ENCODE measurements at regions of chr14 and their contacts with region 1.

Region 1: GRCh38 chr14:67571272-67571850 is 28.7 kb downstream of the PIGH start:
- DNase-seq: peak; percentile 78
- H3K4me3 Mint-ChIP-seq: no peak overlapping the region
- H3K27ac Mint-ChIP-seq: no peak overlapping the region
- H3K4me1 Mint-ChIP-seq: no peaks in the 10 kb centered on the region
- H3K27me3 Mint-ChIP-seq: peaks cover 2% of the 10 kb centered on the region

Region 2: DNA sequence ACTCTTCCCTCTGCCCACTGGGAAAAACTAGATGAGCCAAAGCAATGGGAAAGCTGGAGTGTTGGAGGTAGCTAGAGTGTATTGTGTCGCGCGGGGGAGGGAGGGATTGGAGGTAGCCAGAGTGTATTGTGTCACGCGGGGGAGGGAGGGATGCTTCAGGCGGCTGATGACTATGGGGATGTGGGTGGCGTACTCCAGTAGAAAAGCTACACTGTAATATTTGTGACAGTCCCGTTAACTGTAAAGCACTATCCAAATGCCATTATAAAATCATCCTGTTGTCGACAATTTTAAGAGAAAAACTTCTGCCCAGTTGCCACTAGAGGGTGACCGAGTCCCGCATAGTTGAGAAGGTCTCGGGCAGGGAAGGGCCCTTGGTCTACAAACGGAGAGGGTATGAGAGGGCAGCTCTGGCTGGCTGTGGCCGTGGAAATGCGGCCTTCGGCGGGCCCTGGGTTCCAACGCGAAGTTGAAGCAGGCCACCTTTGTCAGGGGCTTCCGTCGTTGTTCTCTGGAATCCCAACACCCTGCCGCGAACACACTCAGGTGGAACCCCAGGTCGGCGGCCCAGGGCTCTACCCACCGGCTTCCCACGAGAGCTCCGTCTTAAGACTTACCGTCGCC is 144.3 kb before region 1 on chr14:
- CTCF ChIA-PET with region 1: interaction called, 249 read pairs
- POLR2A ChIA-PET with region 1: interaction called, 3 read pairs
- intact Hi-C with region 1: loop called (anchors 1 kb)
- DNase-seq: peak; percentile 80
- H3K4me3 Mint-ChIP-seq: no peak overlapping the region
- H3K27ac Mint-ChIP-seq: no peak overlapping the region
- H3K4me1 Mint-ChIP-seq: peaks cover 3% of the 10 kb centered on the region
- H3K27me3 Mint-ChIP-seq: peaks cover 22% of the 10 kb centered on the region

Region 3: GRCh38 chr14:67514650-67515385 is 56.5 kb before region 1 on chr14:
- CTCF ChIA-PET with region 1: interaction called, 18 read pairs
- POLR2A ChIA-PET with region 1: no interaction called
- intact Hi-C with region 1: no loop called
- DNase-seq: peak; percentile 44
- H3K4me3 Mint-ChIP-seq: peak overlapping the region; percentile 78
- H3K27ac Mint-ChIP-seq: no peak overlapping the region
- H3K4me1 Mint-ChIP-seq: peaks cover 7% of the 10 kb centered on the region
- H3K27me3 Mint-ChIP-seq: no peaks in the 10 kb centered on the region

Region 4: DNA sequence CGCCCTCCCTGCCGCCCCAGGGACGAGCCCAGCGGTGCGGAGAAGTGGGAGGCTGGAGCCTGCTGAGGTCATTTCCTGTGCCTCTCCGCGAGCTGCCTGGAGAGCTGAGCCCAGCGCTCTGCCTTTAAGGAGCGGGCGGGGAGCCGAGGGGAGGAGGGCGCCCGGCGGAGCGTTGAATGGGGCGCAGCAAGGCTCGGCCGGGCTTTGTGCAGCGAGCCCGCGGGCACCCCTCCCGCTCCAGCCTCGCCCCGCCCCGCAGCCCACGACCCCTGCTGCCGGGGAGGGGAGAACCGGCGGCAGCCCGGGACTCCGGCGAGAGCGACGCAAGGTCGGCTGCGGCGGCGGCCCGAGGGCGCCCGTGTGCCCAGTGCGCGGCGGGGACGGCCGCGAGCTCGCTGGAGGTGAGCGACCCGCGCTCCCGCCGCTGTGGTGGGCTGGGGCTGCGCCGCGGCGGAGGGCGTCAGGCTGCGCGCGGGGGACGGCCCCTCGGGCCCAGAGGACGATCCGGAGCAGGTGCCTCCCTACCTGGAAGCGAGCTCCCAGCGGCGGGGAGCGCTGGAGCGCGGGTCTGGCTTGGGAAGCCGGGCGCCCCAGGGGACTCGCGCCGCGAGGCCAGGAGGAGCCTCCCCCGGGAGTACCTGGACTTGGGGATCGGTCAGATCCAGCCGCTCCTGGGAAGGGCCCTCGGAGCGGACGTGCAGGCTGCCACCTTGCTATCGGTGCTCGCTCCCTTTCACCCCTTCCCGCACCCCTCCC is 38.2 kb before region 1 on chr14 and contains the start of gene PLEKHH1:
- CTCF ChIA-PET with region 1: interaction called, 97 read pairs
- POLR2A ChIA-PET with region 1: no interaction called
- intact Hi-C with region 1: no loop called
- DNase-seq: peak; percentile 77
- H3K4me3 Mint-ChIP-seq: peak within 1 kb of the TSS; percentile 64
- H3K27ac Mint-ChIP-seq: no peak within 1 kb of the TSS
- H3K4me1 Mint-ChIP-seq: peaks cover 4% of the 10 kb centered on the region
- H3K27me3 Mint-ChIP-seq: peaks cover 23% of the 10 kb centered on the region
- total RNA-seq, gene PLEKHH1: 1.7 to 1.9 TPM

Region 5: DNA sequence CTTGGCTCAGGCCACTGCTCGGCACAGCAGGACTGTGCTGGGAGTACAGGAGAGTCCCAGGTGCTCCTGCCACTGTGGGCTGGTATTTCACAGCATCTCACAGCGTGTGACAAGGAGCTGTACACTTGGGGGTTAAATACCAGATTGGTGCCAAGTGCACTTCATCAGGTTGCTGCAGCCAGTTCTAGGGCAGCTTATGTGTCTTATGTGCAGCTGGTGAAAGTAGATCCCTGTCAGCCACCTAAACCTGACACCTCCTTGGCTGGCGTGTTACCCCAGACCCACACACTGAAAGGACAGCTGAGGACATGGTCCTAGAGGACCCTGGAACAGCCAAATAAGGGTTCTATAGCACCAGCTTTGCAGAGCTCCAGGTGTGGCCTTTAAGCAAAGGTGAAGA is 19.4 kb before region 1 on chr14:
- CTCF ChIA-PET with region 1: interaction called, 18 read pairs
- POLR2A ChIA-PET with region 1: no interaction called
- intact Hi-C with region 1: no loop called
- DNase-seq: no peak
- H3K4me3 Mint-ChIP-seq: no peak overlapping the region
- H3K27ac Mint-ChIP-seq: no peak overlapping the region
- H3K4me1 Mint-ChIP-seq: no peaks in the 10 kb centered on the region
- H3K27me3 Mint-ChIP-seq: no peaks in the 10 kb centered on the region

Region 6: DNA sequence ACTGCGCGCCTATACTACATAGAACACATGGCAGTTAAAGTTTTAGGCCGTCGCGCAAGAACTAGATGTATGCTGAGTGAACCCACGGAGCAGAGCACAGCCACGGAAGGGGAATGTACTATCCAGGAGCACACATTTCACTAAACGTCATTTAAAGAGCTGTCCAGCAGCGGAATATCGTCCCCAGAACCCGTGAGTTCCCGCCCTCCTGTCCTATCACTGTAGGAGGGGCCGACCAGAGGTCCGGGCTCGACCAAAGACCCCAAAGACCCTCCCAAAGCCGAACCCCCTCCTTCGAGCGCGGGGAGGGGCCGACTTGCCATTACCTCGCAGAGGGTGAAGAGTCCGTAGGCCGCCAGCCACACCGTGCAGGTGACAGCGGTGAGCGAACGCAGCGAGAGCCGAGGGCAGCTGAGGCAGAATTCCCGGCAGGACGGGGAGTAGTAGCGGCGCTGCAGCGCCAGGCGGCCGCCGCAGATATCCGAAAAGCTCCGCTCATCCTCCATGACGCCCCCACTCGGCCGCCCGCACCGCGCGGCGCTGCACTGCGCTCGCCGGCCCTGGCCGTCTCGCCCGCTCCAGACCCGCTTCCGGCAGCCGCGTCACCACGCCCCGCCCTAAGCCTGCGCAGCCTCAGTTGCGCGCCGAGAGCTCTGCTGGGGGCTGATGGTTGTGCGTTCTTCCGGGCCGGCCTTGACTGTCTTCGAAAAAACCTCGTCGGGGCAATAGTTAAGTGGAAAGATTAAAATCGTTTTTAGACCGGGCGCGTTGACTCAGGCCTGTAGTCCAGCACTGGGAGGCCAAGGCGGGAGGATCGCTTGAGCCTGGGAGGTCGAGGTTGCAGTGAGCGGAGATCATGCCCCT is 28.6 kb after region 1 on chr14 and contains the start of gene PIGH:
- CTCF ChIA-PET with region 1: interaction called, 10 read pairs
- POLR2A ChIA-PET with region 1: no interaction called
- intact Hi-C with region 1: no loop called
- DNase-seq: peak; percentile 96
- H3K4me3 Mint-ChIP-seq: peak within 1 kb of the TSS; percentile 95
- H3K27ac Mint-ChIP-seq: peak within 1 kb of the TSS; percentile 88
- H3K4me1 Mint-ChIP-seq: peaks cover 34% of the 10 kb centered on the region
- H3K27me3 Mint-ChIP-seq: no peaks in the 10 kb centered on the region
- total RNA-seq, gene PIGH: 13.1 to 17.1 TPM

Region 7: DNA sequence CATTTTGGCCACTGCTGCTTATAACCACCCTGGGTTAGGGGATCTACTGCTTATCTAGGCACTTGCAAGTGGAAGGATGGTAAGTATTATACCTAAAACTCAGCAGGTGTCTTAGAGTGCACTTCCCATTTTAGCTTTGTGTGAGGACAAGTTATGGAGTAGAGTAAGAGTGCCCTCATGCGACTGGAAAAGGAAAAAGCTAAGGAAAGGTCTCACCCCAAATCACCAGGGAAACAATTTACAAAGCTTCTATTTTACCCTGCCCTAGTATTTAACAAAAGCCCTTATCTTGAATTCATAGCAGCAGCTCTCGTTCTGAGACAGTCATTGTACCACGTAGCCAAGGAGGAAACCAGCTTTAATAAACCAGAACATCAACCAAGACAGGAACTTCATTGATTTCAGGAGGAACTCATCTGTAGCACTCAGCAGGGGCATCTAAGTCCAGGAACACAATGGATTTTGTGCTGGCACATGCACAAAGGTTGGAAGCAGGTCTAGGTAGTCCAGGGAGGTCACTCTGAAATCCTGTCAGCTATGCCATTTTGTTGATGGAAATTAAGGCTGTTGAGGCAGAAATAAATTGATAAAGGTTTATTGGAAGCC is 133.2 kb after region 1 on chr14:
- CTCF ChIA-PET with region 1: interaction called, 32 read pairs
- POLR2A ChIA-PET with region 1: no interaction called
- intact Hi-C with region 1: no loop called
- DNase-seq: peak; percentile 24
- H3K4me3 Mint-ChIP-seq: no peak overlapping the region
- H3K27ac Mint-ChIP-seq: no peak overlapping the region
- H3K4me1 Mint-ChIP-seq: peaks cover 2% of the 10 kb centered on the region
- H3K27me3 Mint-ChIP-seq: peaks cover 3% of the 10 kb centered on the region

Region 8: DNA sequence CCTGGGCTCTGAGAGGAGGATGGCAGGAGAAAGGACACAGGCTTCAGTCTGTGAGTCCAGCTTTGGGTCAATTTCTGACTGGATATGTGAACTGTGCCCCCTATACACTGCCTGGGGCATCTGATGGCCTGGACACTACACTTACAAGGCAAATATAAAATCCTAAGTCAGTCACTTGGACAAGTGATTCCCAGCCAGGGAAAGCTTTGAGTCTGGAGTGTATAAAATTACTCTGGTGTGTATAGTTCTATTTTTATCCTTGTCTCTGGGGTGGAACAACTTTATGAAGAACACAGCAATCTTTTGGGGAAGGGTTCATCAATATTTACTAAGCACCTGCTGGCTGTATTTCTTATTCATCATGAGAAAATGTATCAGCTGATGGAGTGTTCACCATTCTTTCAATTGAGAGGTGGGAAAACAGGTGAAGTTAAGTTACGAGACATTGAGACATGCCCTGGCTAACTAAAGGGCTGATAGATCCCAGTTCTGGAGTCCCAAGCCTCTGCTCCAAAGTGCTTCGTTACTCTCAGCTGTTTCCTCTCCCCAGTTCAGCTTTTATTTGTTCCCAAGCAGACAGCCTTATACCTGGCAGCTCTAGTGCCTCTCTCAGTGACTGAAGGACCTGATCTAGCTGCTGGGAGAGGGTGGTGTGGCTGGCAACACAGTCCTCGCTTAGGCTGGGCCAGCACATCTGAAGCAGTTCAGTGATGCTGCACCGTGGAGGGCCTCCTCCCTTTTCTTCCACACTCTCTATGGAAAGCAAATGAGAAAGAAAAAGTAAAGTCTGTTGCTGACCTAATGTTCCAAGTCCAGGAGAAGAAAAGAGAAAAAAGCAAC is 214.1 kb after region 1 on chr14:
- CTCF ChIA-PET with region 1: no interaction called
- POLR2A ChIA-PET with region 1: no interaction called
- intact Hi-C with region 1: no loop called
- DNase-seq: no peak
- H3K4me3 Mint-ChIP-seq: no peak overlapping the region
- H3K27ac Mint-ChIP-seq: no peak overlapping the region
- H3K4me1 Mint-ChIP-seq: no peaks in the 10 kb centered on the region
- H3K27me3 Mint-ChIP-seq: no peaks in the 10 kb centered on the region

Measured in activated CD4-positive, alpha-beta memory T cell treated with anti-CD3 and anti-CD28 coated beads for 36 hours (primary cell).